Common myeloid progenitor, CD34-positive (primary cell): ENCODE measurements at regions of chr11 and their contacts with region 1.

Region 1: GRCh38 chr11:10564696-10565318 is 3.7 kb downstream of the LYVE1 start:
- DNase-seq: peak in 2 of 3 donors; percentile 59
- H3K4me3 ChIP-seq: no peak overlapping the region
- H3K27ac ChIP-seq: no peak overlapping the region
- H3K4me1 ChIP-seq: peaks cover 0 to 6% (median 3%) of the 10 kb centered on the region in 4 experiments
- H3K27me3 ChIP-seq: no peaks in the 10 kb centered on the region

Region 2: GRCh38 chr11:10581481-10582019 is 16.7 kb after region 1 on chr11:
- CTCF ChIA-PET with region 1: interaction called, 16 read pairs
- POLR2A ChIA-PET with region 1: no interaction called
- DNase-seq: peak; percentile 71 to 95 (median 87)
- H3K4me3 ChIP-seq: peak overlapping the region in 1 of 7 experiments; percentile 19
- H3K27ac ChIP-seq: no peak overlapping the region
- H3K4me1 ChIP-seq: peaks cover 30 to 61% (median 49%) of the 10 kb centered on the region in 4 experiments
- H3K27me3 ChIP-seq: no peaks in the 10 kb centered on the region

Region 3: GRCh38 chr11:10719616-10720015 is 154.8 kb after region 1 on chr11:
- CTCF ChIA-PET with region 1: no interaction called
- POLR2A ChIA-PET with region 1: no interaction called
- DNase-seq: no peak
- H3K4me3 ChIP-seq: no peak overlapping the region
- H3K27ac ChIP-seq: no peak overlapping the region
- H3K4me1 ChIP-seq: peaks cover 2 to 30% (median 21%) of the 10 kb centered on the region in 4 experiments
- H3K27me3 ChIP-seq: no peaks in the 10 kb centered on the region